Heart left ventricle (tissue), 16 donors: ENCODE measurements at regions of chr4 and their contacts with region 1.

Region 1: GRCh38 chr4:88514557-88515511 is 8.7 kb downstream of the PYURF start:
- DNase-seq: no peak
- ATAC-seq: no peak
- H3K4me3 ChIP-seq: no peak overlapping the region
- H3K27ac ChIP-seq: no peak overlapping the region
- H3K4me1 ChIP-seq: peaks cover 0 to 3% (median 0%) of the 10 kb centered on the region in 12 donors
- H3K27me3 ChIP-seq: no peaks in the 10 kb centered on the region
- CTCF ChIP-seq: no peak
- POLR2A ChIP-seq: no peak

Region 2: DNA sequence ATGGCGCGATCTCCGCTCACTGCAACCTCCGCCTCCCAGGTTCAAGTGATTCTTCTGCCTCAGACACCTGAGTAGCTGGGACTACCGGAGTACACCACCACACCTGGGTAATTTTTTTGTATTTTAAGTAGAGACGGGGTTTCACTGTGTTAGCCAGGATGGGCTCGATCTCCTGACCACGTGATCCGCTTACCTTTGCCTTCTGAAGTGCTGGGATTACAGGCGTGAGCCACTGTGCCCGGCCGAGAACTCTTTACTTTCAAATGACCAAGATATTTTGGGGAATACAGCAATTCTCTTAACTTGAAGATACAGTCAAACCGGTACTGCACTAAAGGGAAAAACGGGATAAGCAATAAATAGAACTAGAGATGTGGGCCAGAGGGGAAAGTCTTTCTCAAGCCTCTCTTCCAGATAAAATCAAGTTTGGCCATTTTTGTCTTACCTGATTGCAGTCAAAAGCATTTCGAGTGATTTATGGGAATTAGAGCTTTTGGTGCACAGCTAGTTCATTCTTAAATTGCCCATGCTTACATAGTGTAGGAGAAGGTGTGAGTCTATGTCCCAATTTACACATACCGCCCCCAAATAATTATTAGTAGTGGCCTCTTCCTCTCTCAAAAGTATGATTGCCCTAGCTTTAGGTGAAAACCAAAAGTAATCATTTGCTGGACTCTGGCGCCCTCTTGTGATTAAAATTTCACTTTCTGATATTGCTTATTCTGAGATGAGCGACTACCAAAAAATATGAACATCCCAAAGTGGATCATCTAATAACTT is 303.2 kb before region 1 on chr4:
- intact Hi-C with region 1: loop called in 2 of 10 experiments (anchors 5 kb)
- DNase-seq: peak in 2 of 5 donors; percentile 29 to 33
- ATAC-seq: peak in 3 of 4 donors; percentile 55 to 63 (median 62)
- H3K4me3 ChIP-seq: no peak overlapping the region
- H3K27ac ChIP-seq: no peak overlapping the region
- H3K4me1 ChIP-seq: peaks cover 0 to 3% (median 0%) of the 10 kb centered on the region in 12 donors
- H3K27me3 ChIP-seq: no peaks in the 10 kb centered on the region
- CTCF ChIP-seq: peak; percentile 62 to 86 (median 74)
- POLR2A ChIP-seq: no peak

Region 3: GRCh38 chr4:88225232-88226105 is 289.4 kb before region 1 on chr4:
- intact Hi-C with region 1: loop called in 1 of 10 experiments (anchors 2 kb)
- DNase-seq: no peak
- ATAC-seq: peak in 3 of 4 donors; percentile 37 to 51 (median 50)
- H3K4me3 ChIP-seq: no peak overlapping the region
- H3K27ac ChIP-seq: peak overlapping the region in 2 of 12 donors; percentile 26 to 35
- H3K4me1 ChIP-seq: peaks cover 0 to 20% (median 5%) of the 10 kb centered on the region in 12 donors
- H3K27me3 ChIP-seq: no peaks in the 10 kb centered on the region
- CTCF ChIP-seq: no peak
- POLR2A ChIP-seq: no peak

Region 4: DNA sequence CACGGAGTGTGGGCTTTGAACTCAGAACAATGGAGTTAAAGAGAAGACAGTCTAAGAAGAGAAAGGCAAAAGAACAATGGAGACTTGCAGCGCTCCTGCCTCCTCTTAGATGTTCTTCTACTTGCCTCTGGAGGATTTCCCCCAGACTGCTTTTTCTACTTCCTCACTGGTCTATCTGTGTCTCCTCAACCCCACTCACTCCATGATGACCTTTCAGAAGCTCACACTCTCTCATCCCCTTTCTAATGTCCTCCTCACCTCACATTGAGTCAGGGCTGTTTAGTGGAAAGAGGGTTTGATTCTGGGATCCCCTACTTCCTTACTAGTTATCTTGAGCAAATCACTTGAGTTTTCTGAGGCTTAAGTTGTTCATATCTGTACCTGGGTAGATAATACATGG is 148.4 kb before region 1 on chr4:
- intact Hi-C with region 1: loop called in 4 of 10 experiments (anchors 5 to 10 kb)
- DNase-seq: no peak
- ATAC-seq: no peak
- H3K4me3 ChIP-seq: no peak overlapping the region
- H3K27ac ChIP-seq: no peak overlapping the region
- H3K4me1 ChIP-seq: peaks cover 0 to 5% (median 0%) of the 10 kb centered on the region in 12 donors
- H3K27me3 ChIP-seq: no peaks in the 10 kb centered on the region
- CTCF ChIP-seq: no peak
- POLR2A ChIP-seq: no peak

Region 5: GRCh38 chr4:88456757-88457306 is 58.0 kb before region 1 on chr4 and contains the start of gene HERC5:
- intact Hi-C with region 1: loop called in 5 of 10 experiments (anchors 5 to 10 kb)
- DNase-seq: peak; percentile 93 to 95 (median 95)
- ATAC-seq: peak; percentile 94 to 97 (median 96)
- H3K4me3 ChIP-seq: peak within 1 kb of the TSS; percentile 52 to 92 (median 73)
- H3K27ac ChIP-seq: peak within 1 kb of the TSS; percentile 33 to 85 (median 72)
- H3K4me1 ChIP-seq: peaks cover 0 to 25% (median 5%) of the 10 kb centered on the region in 12 donors
- H3K27me3 ChIP-seq: no peaks in the 10 kb centered on the region
- CTCF ChIP-seq: peak; percentile 41 to 88 (median 72)
- POLR2A ChIP-seq: no peak
- total RNA-seq, gene HERC5: 0.88 to 5.5 (median 2.3) TPM

Region 6: DNA sequence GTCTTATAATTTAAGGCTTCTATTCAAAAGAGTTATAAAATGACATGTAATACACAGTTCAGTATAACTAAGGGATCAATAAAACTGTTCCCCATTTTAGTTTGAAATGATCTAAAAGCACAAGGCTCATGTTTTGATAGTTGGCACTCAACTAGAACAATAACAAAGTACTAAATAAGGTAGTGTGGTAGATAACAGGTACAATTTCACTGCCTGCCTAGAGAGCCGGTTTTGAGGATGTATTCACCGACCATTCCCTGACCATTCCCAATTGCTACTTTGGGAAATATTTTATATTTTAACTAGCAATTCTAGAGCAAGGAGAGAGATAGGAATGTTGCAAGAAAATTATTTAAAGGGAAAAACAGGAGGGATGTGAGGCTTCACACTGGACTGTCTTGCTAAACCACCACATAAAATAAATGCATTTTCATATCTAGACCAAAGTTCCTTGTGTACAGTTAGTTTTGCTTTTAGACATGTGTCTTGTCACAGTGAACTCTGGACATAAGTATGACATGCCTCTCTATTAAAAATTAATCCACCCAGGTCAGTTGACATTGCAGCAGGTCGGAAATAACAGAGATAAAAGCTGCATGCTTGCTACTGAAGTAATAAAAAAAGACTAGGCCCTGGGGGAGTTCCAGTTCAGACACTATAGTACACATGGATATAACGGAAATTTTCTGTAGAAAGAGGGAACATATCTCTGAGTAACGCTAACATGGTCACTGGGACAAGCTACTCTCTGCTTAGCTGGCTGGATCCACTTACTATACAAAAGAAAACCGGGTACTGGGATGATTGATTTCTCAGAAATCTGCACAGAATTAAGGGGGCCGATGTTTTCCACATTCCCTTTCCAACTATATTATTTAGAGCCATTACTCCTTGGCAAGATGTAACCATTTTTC is 239.1 kb after region 1 on chr4:
- intact Hi-C with region 1: no loop called
- DNase-seq: no peak
- ATAC-seq: peak in 1 of 4 donors; percentile 36
- H3K4me3 ChIP-seq: no peak overlapping the region
- H3K27ac ChIP-seq: no peak overlapping the region
- H3K4me1 ChIP-seq: peaks cover 2 to 32% (median 15%) of the 10 kb centered on the region in 12 donors
- H3K27me3 ChIP-seq: no peaks in the 10 kb centered on the region
- CTCF ChIP-seq: no peak
- POLR2A ChIP-seq: no peak